Heart right ventricle (tissue), 16 donors: ENCODE measurements at regions of chr6 and their contacts with region 1.

Region 1: DNA sequence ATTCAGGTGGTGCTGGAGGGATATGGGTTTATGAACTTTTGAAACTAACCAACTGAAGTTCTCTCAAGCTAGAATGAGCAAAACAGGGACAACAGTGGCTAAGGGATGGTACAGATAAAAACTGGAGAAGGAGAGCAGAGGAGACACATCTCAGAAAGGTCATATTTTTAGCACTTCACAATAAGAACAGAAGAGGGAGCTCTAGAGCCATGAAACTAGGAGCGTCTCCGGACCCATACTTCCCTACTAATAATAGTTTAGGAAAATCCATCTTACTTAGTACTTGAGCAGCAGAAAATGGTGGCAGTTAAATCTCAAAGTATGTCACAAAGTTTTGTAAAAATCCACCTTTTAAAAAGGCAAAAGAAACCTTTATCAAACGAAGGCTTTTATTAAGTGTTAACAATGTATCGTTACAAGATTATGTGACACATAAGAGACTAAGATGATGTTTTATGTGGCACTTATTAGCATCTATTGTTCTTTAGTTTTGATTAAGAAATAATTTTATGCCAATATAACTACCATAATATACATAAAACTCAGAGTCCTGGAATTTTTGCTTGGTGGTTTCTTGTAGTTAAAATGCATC is 278.6 kb downstream of the TBC1D32 start:
- DNase-seq: no peak
- ATAC-seq: peak in 4 of 8 donors; percentile 43 to 67 (median 59)
- H3K4me3 ChIP-seq: no peak overlapping the region
- H3K27ac ChIP-seq: no peak overlapping the region
- H3K4me1 ChIP-seq: no peaks in the 10 kb centered on the region
- H3K27me3 ChIP-seq: no peaks in the 10 kb centered on the region
- CTCF ChIP-seq: peak; percentile 31 to 82 (median 72)

Region 2: GRCh38 chr6:119929121-119929520 is 1126.5 kb before region 1 on chr6:
- intact Hi-C with region 1: no loop called
- DNase-seq: no peak
- ATAC-seq: no peak
- H3K4me3 ChIP-seq: no peak overlapping the region
- H3K27ac ChIP-seq: no peak overlapping the region
- H3K4me1 ChIP-seq: no peaks in the 10 kb centered on the region
- H3K27me3 ChIP-seq: no peaks in the 10 kb centered on the region
- CTCF ChIP-seq: no peak

Region 3: DNA sequence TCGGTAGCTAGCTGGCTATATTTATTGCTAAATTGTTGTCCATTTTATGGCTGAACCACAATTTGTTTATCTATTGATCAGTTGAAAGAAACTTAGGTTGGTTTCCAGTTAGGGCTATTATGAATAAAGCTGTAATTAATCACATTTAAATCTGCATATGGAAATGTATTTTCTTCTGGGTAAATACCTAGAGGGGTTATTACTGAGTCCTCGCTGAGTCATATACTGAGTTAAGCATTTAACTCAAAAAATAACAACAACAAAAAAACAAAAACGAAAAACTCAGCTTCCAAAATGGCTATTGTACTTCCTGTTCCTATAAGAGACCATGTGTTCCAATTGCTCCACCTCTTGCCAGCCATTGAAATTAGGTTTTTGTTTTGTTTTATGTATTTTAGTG is 20.5 kb after region 1 on chr6:
- intact Hi-C with region 1: loop called in 1 of 10 experiments (anchors 1 kb)
- DNase-seq: no peak
- ATAC-seq: no peak
- H3K4me3 ChIP-seq: no peak overlapping the region
- H3K27ac ChIP-seq: no peak overlapping the region
- H3K4me1 ChIP-seq: no peaks in the 10 kb centered on the region
- H3K27me3 ChIP-seq: no peaks in the 10 kb centered on the region
- CTCF ChIP-seq: no peak

Region 4: DNA sequence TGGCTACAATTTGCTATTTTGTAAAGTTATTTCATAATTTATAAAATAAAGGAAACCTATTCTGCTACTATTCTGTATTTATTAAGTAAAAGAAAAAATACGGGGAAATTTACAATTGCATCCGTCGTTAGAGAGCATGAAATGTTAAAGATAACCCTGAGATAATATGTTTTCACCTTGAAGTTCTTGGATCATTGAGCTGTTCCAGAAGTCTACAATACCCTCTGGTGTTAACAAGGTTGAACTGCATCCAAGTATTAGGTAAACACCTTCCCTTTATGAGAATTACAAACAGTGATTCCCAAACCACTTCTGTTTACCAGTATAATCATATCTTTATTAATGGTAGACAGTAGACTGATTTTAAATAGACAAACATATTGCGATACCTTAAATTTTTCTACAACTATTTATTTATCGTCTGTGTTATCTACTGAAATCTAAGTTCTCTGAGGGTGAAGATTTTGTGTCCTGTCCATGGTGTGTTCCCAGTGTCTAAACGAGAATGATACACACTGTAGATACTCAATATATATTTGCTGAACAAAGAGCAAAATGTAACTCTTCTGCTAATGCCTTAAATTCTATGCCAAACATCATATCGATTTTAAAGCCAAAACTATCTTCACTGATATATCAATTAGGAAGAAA is 250.4 kb after region 1 on chr6:
- intact Hi-C with region 1: loop called in 9 of 10 experiments (anchors 2 to 10 kb)
- DNase-seq: no peak
- ATAC-seq: no peak
- H3K4me3 ChIP-seq: no peak overlapping the region
- H3K27ac ChIP-seq: no peak overlapping the region
- H3K4me1 ChIP-seq: peaks cover 0 to 7% (median 0%) of the 10 kb centered on the region in 9 donors
- H3K27me3 ChIP-seq: no peaks in the 10 kb centered on the region
- CTCF ChIP-seq: peak; percentile 18 to 65 (median 56)

Region 5: GRCh38 chr6:121399966-121400365 is 344.3 kb after region 1 on chr6:
- intact Hi-C with region 1: loop called in 4 of 10 experiments (anchors 10 kb)
- DNase-seq: no peak
- ATAC-seq: no peak
- H3K4me3 ChIP-seq: no peak overlapping the region
- H3K27ac ChIP-seq: no peak overlapping the region
- H3K4me1 ChIP-seq: no peaks in the 10 kb centered on the region
- H3K27me3 ChIP-seq: peaks cover 0 to 5% (median 0%) of the 10 kb centered on the region in 7 donors
- CTCF ChIP-seq: no peak

Region 6: GRCh38 chr6:121791396-121792315 is 736.0 kb after region 1 on chr6:
- intact Hi-C with region 1: no loop called
- DNase-seq: no peak
- ATAC-seq: no peak
- H3K4me3 ChIP-seq: no peak overlapping the region
- H3K27ac ChIP-seq: no peak overlapping the region
- H3K4me1 ChIP-seq: peaks cover 0 to 3% (median 0%) of the 10 kb centered on the region in 9 donors
- H3K27me3 ChIP-seq: no peaks in the 10 kb centered on the region
- CTCF ChIP-seq: no peak

Region 7: GRCh38 chr6:122289762-122290539 is 1234.3 kb after region 1 on chr6:
- intact Hi-C with region 1: loop called in 1 of 10 experiments (anchors 10 kb)
- DNase-seq: no peak
- ATAC-seq: no peak
- H3K4me3 ChIP-seq: no peak overlapping the region
- H3K27ac ChIP-seq: no peak overlapping the region
- H3K4me1 ChIP-seq: peaks cover 0 to 4% (median 0%) of the 10 kb centered on the region in 9 donors
- H3K27me3 ChIP-seq: no peaks in the 10 kb centered on the region
- CTCF ChIP-seq: peak in 6 of 9 donors; percentile 15 to 46 (median 44)